Right lobe of liver (tissue), 6 donors: ENCODE measurements at regions of chr11 and their contacts with region 1.

Region 1: DNA sequence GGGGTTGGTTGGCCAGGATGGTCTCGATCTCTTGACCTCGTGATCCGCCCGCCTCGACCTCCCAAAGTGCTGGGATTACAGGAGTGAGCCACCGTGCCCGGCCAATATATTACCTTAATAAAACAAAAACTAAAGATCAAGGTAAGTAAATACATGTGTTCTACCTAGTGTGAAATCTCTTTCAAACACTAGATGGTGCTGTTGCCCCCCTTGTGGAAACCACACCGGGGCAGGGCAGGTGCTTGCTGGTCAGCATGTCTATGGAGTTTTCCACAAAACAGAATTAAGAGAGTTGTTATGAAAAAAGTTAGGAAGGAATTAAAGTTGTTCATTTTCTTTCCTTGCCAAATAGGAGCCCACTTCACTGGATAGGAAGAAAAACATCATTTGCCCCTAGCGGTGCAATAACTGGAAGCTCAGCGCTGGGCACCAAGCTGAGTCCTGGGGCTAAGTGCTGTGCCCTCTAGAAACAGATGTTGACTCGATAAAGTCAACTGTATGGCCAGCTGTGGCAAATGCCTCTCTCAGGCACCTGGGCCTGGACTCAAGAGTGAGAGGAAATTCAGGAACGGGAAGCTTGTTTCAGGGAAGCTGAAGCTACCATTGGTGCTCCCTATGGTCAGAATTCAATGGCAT is 6.3 kb upstream of the KCNJ5 start:
- DNase-seq: peak in 1 of 3 donors; percentile 74
- ATAC-seq: peak; percentile 94 to 98 (median 96)
- H3K4me3 ChIP-seq: no peak overlapping the region
- H3K27ac ChIP-seq: no peak overlapping the region
- H3K4me1 ChIP-seq: no peaks in the 10 kb centered on the region
- H3K27me3 ChIP-seq: no peaks in the 10 kb centered on the region
- CTCF ChIP-seq: peak; percentile 82 to 91 (median 86)
- POLR2A ChIP-seq: no peak

Region 2: DNA sequence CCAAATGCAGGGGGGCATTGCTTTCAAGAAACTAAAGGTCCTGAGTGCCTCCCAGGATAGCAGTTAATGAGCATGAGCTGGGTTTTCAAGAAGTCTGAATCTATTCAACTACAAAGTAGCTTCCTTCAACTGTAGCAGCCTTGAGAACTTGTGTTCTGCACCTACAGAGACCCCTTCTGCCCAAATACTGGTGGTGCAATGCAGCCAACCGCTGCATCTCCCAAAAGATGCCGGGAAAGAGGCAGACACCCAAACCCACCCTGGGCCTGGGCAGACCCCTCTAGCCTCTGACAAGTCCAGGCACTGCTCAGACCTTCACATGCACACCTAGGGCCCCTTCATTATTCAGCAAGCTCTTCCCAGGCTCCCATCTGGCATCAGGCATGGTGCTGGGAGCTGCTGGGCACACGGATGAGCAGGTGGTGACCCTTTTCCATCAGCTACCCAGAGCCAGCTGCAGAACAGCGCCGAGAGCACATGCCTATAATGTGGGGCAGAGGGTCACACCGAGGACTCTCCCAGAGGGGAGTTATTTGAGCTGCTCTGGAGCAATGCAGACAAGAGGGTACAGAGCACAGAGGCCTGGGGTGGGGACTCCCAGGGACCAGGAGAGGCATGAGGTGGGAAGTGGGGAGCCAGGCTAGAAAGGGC is 252.6 kb before region 1 on chr11:
- intact Hi-C with region 1: no loop called
- DNase-seq: no peak
- ATAC-seq: peak in 3 of 4 donors; percentile 19 to 34 (median 22)
- H3K4me3 ChIP-seq: no peak overlapping the region
- H3K27ac ChIP-seq: no peak overlapping the region
- H3K4me1 ChIP-seq: peaks cover 0 to 20% (median 8%) of the 10 kb centered on the region in 4 donors
- H3K27me3 ChIP-seq: no peaks in the 10 kb centered on the region
- CTCF ChIP-seq: peak; percentile 41 to 56 (median 49)
- POLR2A ChIP-seq: no peak

Region 3: GRCh38 chr11:128859563-128860441 is 25.0 kb before region 1 on chr11:
- intact Hi-C with region 1: no loop called
- DNase-seq: peak; percentile 68 to 79 (median 74)
- ATAC-seq: peak; percentile 81 to 90 (median 86)
- H3K4me3 ChIP-seq: no peak overlapping the region
- H3K27ac ChIP-seq: no peak overlapping the region
- H3K4me1 ChIP-seq: no peaks in the 10 kb centered on the region
- H3K27me3 ChIP-seq: no peaks in the 10 kb centered on the region
- CTCF ChIP-seq: peak; percentile 51 to 94 (median 92)
- POLR2A ChIP-seq: no peak

Region 4: DNA sequence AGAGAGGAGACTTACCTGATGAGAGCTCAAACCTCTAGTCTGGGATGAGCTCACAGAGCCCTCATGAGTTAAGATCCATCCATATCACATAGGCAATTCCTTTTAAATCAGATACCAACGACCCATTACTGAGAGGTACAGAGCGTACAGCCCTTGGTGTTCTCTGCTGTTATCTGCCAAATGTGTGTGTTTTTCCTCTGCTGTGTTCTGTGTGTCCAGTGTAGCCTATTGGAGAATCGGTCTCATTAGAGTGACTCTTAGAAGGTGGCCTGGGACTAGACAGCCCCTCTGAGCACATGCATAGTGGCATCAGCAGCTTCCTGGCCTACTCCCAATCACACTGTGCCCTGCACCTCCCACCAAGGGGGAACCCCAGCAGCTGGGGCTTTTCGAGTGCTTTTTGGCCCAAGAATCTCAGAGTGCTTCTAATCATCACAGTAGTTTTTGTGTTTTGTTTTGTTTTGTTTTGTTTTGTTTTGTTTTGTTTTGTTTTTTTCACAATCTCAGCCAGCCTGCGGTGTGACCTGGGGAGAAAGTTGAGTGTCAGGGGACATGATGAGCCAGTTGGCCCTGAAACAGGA is 32.4 kb after region 1 on chr11:
- intact Hi-C with region 1: no loop called
- DNase-seq: no peak
- ATAC-seq: no peak
- H3K4me3 ChIP-seq: no peak overlapping the region
- H3K27ac ChIP-seq: no peak overlapping the region
- H3K4me1 ChIP-seq: no peaks in the 10 kb centered on the region
- H3K27me3 ChIP-seq: no peaks in the 10 kb centered on the region
- CTCF ChIP-seq: no peak
- POLR2A ChIP-seq: no peak

Region 5: GRCh38 chr11:128956401-128957201 is 71.8 kb after region 1 on chr11:
- intact Hi-C with region 1: loop called (anchors 5 kb)
- DNase-seq: no peak
- ATAC-seq: peak; percentile 90 to 96 (median 92)
- H3K4me3 ChIP-seq: no peak overlapping the region
- H3K27ac ChIP-seq: no peak overlapping the region
- H3K4me1 ChIP-seq: peaks cover 0 to 2% (median 0%) of the 10 kb centered on the region in 4 donors
- H3K27me3 ChIP-seq: no peaks in the 10 kb centered on the region
- CTCF ChIP-seq: peak; percentile 72 to 88 (median 74)
- POLR2A ChIP-seq: no peak